ENCODE measurements at regions of chr16 and their contacts with region 1.

Region 1: GRCh38 chr16:85448557-85449197 is 164.4 kb upstream of the GSE1 start:
- DNase-seq: no peak
- ATAC-seq: no peak
- H3K4me3 ChIP-seq: no peak overlapping the region
- H3K27ac ChIP-seq: no peak overlapping the region
- H3K4me1 ChIP-seq: peaks cover 21% of the 10 kb centered on the region
- H3K27me3 ChIP-seq: no peaks in the 10 kb centered on the region
- CTCF ChIP-seq: no peak

Region 2: DNA sequence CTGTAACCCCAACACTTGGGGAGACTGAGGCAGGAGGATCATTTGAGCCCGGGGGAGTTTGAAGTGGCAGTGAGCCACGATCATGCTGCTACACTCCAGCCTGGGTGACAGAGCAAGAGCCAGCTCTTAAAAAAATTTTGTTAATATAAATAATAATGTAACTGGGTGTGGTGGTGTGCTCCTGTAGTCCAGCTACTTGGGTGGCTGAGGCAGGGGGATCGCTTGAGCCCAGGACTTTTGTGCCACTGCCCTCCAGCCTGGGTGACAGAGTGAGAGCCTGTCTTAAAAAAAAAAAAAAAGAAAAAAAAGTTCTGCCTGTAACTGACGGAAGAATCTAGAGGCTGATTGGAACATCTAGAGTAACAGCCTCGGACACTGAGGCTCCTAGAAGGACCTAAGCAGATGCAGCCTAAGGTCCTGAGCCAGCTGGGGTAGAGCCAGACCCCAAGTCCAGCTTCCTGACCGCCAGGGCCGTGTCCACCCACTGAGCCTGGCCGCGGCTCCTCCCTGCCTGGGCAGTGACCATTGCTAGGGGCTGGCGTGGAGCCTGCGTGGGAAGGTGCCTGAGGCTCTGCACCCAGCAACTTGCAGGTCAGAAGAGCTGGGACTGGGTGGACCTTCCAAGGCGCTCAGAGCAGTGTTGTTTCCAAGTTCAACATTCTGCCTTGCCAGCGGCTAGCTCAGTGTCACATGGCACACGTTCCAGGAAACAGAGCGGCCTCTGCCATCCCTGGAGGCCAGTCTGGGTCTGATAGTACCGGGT is 127.0 kb before region 1 on chr16:
- CTCF ChIA-PET with region 1: no interaction called
- POLR2A ChIA-PET with region 1: interaction called, 11 read pairs
- in situ Hi-C with region 1: no loop called
- intact Hi-C with region 1: no loop called
- DNase-seq: no peak
- ATAC-seq: peak; percentile 86
- H3K4me3 ChIP-seq: peak overlapping the region in 1 of 2 experiments; percentile 15; a peak in 2 of 4 replicates
- H3K27ac ChIP-seq: peak overlapping the region; percentile 98
- H3K4me1 ChIP-seq: peaks cover 45% of the 10 kb centered on the region
- H3K27me3 ChIP-seq: no peaks in the 10 kb centered on the region
- CTCF ChIP-seq: no peak

Region 3: GRCh38 chr16:85498273-85499006 is 49.8 kb after region 1 on chr16:
- CTCF ChIA-PET with region 1: no interaction called
- POLR2A ChIA-PET with region 1: no interaction called
- in situ Hi-C with region 1: no loop called
- intact Hi-C with region 1: no loop called
- DNase-seq: no peak
- ATAC-seq: peak; percentile 52; the same call in 1 of the 2 replicates
- H3K4me3 ChIP-seq: no peak overlapping the region
- H3K27ac ChIP-seq: no peak overlapping the region
- H3K4me1 ChIP-seq: no peaks in the 10 kb centered on the region
- H3K27me3 ChIP-seq: no peaks in the 10 kb centered on the region
- CTCF ChIP-seq: no peak

Region 4: GRCh38 chr16:85541980-85542900 is 93.6 kb after region 1 on chr16:
- CTCF ChIA-PET with region 1: no interaction called
- POLR2A ChIA-PET with region 1: no interaction called
- in situ Hi-C with region 1: no loop called
- intact Hi-C with region 1: loop called (anchors 10 kb)
- DNase-seq: no peak
- ATAC-seq: 0 out of 2 replicates have a peak, but pooled peaks have one; percentile 40
- H3K4me3 ChIP-seq: no peak overlapping the region
- H3K27ac ChIP-seq: no peak overlapping the region
- H3K4me1 ChIP-seq: peaks cover 6% of the 10 kb centered on the region
- H3K27me3 ChIP-seq: no peaks in the 10 kb centered on the region
- CTCF ChIP-seq: no peak

Measured in Panc1 (cell line).